ENCODE measurements at regions of chr3 and their contacts with region 1.

Region 1: DNA sequence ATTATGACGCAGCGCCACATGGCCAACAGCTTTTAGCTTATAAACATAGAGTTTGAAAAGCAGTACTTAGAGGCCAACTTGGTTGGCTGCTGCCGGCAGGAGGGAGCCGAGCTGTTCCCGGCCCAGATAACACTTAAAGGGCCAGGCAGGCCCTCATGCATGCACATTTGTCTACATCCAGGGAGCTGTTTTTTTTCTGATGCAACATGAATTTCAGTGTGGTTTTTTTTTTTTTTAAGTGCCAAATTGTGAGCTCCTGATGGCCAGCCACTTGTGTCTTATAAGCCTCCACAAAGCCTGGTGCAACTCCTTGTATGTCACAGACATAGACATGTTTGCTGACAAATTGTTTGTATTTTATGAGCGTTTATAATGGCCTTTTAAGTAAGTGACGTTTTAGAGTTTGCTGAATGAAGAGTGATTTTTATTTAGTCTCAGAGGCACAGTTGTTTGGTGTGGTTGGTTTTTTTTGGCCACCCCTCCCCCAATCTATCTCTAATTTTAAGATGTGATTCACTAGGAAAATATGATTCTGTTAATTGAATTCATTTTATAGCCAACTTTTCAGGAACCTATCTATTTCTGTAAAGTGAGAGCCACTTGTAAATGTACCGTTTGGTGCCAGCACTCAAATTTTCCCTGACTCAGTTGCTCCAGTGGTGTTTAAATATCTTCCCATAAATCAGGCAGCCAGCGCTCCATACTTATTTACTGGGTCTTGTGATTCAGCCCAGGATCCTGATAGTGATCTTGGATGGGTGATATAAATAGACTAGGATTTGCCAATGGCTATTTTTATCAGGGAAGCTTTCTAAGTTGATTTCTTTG is 134.3 kb downstream of the VGLL4 start:
- DNase-seq: peak; percentile 89
- H3K4me3 ChIP-seq: no peak overlapping the region
- H3K27ac ChIP-seq: peak overlapping the region; percentile 87
- H3K4me1 ChIP-seq: peaks cover 36% of the 10 kb centered on the region
- H3K27me3 ChIP-seq: no peaks in the 10 kb centered on the region
- CTCF ChIP-seq: no peak
- POLR2A ChIP-seq: no peak

Region 2: GRCh38 chr3:11548721-11549131 is 39.3 kb after region 1 on chr3:
- CTCF ChIA-PET with region 1: no interaction called
- POLR2A ChIA-PET with region 1: no interaction called
- dilution Hi-C with region 1: no loop called
- intact Hi-C with region 1: loop called (anchors 2 kb)
- DNase-seq: peak; percentile 85
- H3K4me3 ChIP-seq: no peak overlapping the region
- H3K27ac ChIP-seq: peak overlapping the region; percentile 39
- H3K4me1 ChIP-seq: peaks cover 16% of the 10 kb centered on the region
- H3K27me3 ChIP-seq: no peaks in the 10 kb centered on the region
- CTCF ChIP-seq: no peak
- POLR2A ChIP-seq: no peak

Region 3: GRCh38 chr3:11558002-11558401 is 48.6 kb after region 1 on chr3:
- CTCF ChIA-PET with region 1: interaction called, 3 read pairs
- POLR2A ChIA-PET with region 1: no interaction called
- dilution Hi-C with region 1: no loop called
- intact Hi-C with region 1: loop called (anchors 2 kb)
- DNase-seq: peak; percentile 76
- H3K4me3 ChIP-seq: no peak overlapping the region
- H3K27ac ChIP-seq: peak overlapping the region; percentile 78
- H3K4me1 ChIP-seq: peaks cover 51% of the 10 kb centered on the region
- H3K27me3 ChIP-seq: no peaks in the 10 kb centered on the region
- CTCF ChIP-seq: no peak
- POLR2A ChIP-seq: no peak

Region 4: GRCh38 chr3:11582191-11582968 is 73.0 kb after region 1 on chr3:
- CTCF ChIA-PET with region 1: no interaction called
- POLR2A ChIA-PET with region 1: no interaction called
- dilution Hi-C with region 1: no loop called
- intact Hi-C with region 1: loop called (anchors 1 kb)
- DNase-seq: peak; percentile 92
- H3K4me3 ChIP-seq: peak overlapping the region in 1 of 3 experiments; percentile 45
- H3K27ac ChIP-seq: peak overlapping the region; percentile 68
- H3K4me1 ChIP-seq: peaks cover 27% of the 10 kb centered on the region
- H3K27me3 ChIP-seq: no peaks in the 10 kb centered on the region
- CTCF ChIP-seq: no peak
- POLR2A ChIP-seq: peak; percentile 12

Region 5: GRCh38 chr3:11592445-11593298 is 83.3 kb after region 1 on chr3:
- CTCF ChIA-PET with region 1: no interaction called
- POLR2A ChIA-PET with region 1: no interaction called
- dilution Hi-C with region 1: no loop called
- intact Hi-C with region 1: no loop called
- DNase-seq: peak; percentile 80
- H3K4me3 ChIP-seq: no peak overlapping the region
- H3K27ac ChIP-seq: peak overlapping the region; percentile 41
- H3K4me1 ChIP-seq: peaks cover 41% of the 10 kb centered on the region
- H3K27me3 ChIP-seq: no peaks in the 10 kb centered on the region
- CTCF ChIP-seq: no peak
- POLR2A ChIP-seq: no peak

Measured in endothelial cell of umbilical vein (primary cell).